ENCODE measurements at regions of chr5 and their contacts with region 1.

Region 1: GRCh38 chr5:44808435-44809214 is at the start of gene MRPS30:
- DNase-seq: peak; percentile 94
- H3K4me3 Mint-ChIP-seq: peak within 1 kb of the TSS; percentile 99
- H3K27ac Mint-ChIP-seq: peak within 1 kb of the TSS; percentile 98
- H3K4me1 Mint-ChIP-seq: peaks cover 29% of the 10 kb centered on the region
- H3K27me3 Mint-ChIP-seq: peaks cover 1% of the 10 kb centered on the region
- total RNA-seq, gene MRPS30: 47.1 to 49.3 TPM

Region 2: GRCh38 chr5:43602461-43603343 is 1205.9 kb before region 1 on chr5 and contains the start of gene NNT:
- CTCF ChIA-PET with region 1: no interaction called
- POLR2A ChIA-PET with region 1: no interaction called
- intact Hi-C with region 1: loop called (anchors 2 kb)
- DNase-seq: peak; percentile 84
- H3K4me3 Mint-ChIP-seq: peak within 1 kb of the TSS; percentile 97
- H3K27ac Mint-ChIP-seq: peak within 1 kb of the TSS; percentile 93
- H3K4me1 Mint-ChIP-seq: peaks cover 35% of the 10 kb centered on the region
- H3K27me3 Mint-ChIP-seq: no peaks in the 10 kb centered on the region
- total RNA-seq, gene NNT: 96.6 to 99.9 TPM

Region 3: GRCh38 chr5:44783634-44784315 is 24.9 kb before region 1 on chr5:
- CTCF ChIA-PET with region 1: no interaction called
- POLR2A ChIA-PET with region 1: no interaction called
- intact Hi-C with region 1: no loop called
- DNase-seq: no peak
- H3K4me3 Mint-ChIP-seq: no peak overlapping the region
- H3K27ac Mint-ChIP-seq: no peak overlapping the region
- H3K4me1 Mint-ChIP-seq: no peaks in the 10 kb centered on the region
- H3K27me3 Mint-ChIP-seq: peaks cover 3% of the 10 kb centered on the region

Region 4: DNA sequence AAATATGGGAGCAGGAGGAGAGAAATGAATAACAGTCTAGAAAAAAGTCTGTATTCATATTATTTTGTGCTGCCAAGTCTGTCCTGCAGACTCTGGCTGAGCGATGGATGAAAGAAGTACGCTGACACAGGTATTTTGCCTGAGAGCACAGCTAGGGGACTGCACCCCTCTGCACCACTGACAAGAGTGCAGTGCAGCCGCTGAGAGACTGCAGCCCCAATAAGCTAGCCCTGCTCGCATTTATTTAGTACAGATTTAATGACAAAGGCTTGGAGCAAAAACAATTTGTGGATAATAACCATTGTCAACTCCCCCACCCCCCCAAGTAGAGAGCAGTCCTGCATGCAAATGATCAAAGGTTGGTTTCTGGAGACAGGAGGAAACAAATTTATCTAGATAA is 13.1 kb before region 1 on chr5:
- CTCF ChIA-PET with region 1: no interaction called
- POLR2A ChIA-PET with region 1: no interaction called
- intact Hi-C with region 1: no loop called
- DNase-seq: no peak
- H3K4me3 Mint-ChIP-seq: no peak overlapping the region
- H3K27ac Mint-ChIP-seq: no peak overlapping the region
- H3K4me1 Mint-ChIP-seq: no peaks in the 10 kb centered on the region
- H3K27me3 Mint-ChIP-seq: peaks cover 5% of the 10 kb centered on the region

Region 5: DNA sequence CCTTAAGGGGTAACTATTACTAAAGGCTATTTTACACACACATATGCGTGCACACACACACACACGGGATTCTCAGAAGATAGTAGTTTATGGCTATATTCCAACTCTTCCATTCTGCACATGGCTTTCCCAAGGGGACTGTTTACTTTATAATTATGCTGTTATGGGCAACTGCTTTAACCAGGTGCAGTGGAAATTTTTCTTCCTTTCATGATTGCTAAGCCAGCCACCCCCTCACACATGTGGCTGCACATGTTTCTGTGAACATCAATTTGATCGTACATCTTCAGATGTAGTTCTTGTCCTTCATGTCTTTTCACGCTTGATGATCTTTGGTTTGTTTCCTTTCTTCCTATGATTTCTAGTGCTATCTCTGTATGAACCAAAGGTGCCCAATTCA is 37.2 kb after region 1 on chr5:
- CTCF ChIA-PET with region 1: no interaction called
- POLR2A ChIA-PET with region 1: no interaction called
- intact Hi-C with region 1: no loop called
- DNase-seq: no peak
- H3K4me3 Mint-ChIP-seq: no peak overlapping the region
- H3K27ac Mint-ChIP-seq: no peak overlapping the region
- H3K4me1 Mint-ChIP-seq: no peaks in the 10 kb centered on the region
- H3K27me3 Mint-ChIP-seq: no peaks in the 10 kb centered on the region

Region 6: GRCh38 chr5:44875661-44876605 is 67.3 kb after region 1 on chr5:
- CTCF ChIA-PET with region 1: no interaction called
- POLR2A ChIA-PET with region 1: interaction called, 3 read pairs
- intact Hi-C with region 1: loop called (anchors 1 kb)
- DNase-seq: peak; percentile 33
- H3K4me3 Mint-ChIP-seq: peak overlapping the region; percentile 30
- H3K27ac Mint-ChIP-seq: peak overlapping the region; percentile 81
- H3K4me1 Mint-ChIP-seq: peaks cover 16% of the 10 kb centered on the region
- H3K27me3 Mint-ChIP-seq: no peaks in the 10 kb centered on the region

Measured in activated CD4-positive, alpha-beta memory T cell treated with anti-CD3 and anti-CD28 coated beads for 36 hours (primary cell).